Aorta (tissue), 5 donors: ENCODE measurements at regions of chr6 and their contacts with region 1.

Region 1: DNA sequence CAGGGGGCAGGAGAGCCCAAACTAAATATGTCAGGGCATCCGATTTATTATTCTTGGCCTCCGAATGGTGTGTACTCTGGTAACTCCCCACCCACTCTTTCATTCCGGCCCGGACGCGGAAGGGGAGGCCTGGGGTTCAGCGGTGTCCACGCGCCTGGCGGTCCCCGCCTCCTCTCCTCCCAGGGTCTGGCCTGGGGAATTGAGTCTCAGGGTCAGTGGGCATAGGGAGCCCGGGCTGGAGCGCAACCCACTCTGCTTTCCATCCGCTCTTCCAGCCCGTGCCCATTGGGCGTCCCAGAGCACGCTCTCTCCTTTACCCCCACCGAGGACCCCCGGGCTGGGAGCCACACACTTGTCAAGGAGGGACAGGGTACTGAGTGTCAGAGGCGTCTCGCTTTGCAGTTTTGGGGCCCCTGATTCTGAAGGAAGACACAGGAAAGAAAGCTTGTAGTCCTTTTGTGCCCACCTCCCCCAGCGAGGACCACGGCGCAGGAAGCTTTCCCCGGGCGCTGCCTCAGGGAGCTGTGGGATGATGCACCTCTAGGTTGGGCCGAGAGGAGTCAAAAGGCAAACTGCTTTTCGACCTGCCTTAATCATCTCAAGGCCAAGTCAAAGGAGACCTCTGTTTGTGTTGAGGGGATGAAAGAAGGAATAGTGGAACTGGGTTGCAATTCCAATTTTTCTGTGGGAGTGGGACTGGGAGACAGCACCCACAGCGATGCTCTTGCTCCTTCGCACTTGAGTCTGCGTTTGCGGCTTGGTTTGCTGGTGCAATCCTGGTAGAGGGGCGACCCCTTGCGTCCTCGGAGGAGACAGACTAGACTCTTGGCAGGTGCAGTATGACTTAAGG is 2.5 kb downstream of the RSPO3 start:
- DNase-seq: peak; percentile 77 to 88
- ATAC-seq: peak; percentile 71
- H3K4me3 ChIP-seq: no peak overlapping the region
- H3K27ac ChIP-seq: no peak overlapping the region
- H3K4me1 ChIP-seq: no peaks in the 10 kb centered on the region
- H3K27me3 ChIP-seq: no peaks in the 10 kb centered on the region

Region 2: DNA sequence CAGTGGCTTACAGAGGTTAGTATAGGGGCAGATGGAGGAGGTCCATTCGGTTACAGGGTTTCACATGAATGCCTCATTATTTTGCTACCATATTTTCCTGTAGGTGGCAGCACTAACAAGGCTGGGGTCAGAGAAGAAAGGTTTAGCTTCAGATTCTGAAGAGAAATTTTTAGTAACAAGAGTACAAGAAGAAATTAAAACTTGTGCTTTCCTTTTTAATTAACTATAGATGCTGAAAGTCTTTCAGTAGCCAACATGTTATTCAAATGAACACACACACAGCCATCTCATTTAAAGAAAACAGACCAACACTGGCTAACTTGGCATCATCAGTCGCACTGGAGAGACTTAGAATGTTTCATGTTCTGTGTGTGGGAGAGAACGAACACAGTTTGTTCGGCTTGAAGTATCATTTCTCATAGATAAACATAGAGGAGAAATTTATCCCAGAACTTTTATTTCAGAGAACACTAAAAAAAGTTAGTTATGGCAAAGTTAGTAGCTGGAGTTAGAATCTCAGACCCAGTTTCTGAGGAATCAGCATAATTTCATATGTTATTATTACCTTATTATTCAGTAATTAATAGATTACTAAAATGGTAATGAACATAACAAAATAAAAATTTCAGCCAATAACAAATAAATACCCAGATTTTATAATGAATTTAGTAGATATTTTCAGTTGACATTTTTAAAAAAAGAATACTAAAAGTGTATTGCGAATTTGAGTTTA is 316.5 kb before region 1 on chr6:
- intact Hi-C with region 1: loop called in 1 of 2 experiments (anchors 10 kb)
- DNase-seq: no peak
- ATAC-seq: peak; percentile 72
- H3K4me3 ChIP-seq: no peak overlapping the region
- H3K27ac ChIP-seq: no peak overlapping the region
- H3K4me1 ChIP-seq: no peaks in the 10 kb centered on the region
- H3K27me3 ChIP-seq: no peaks in the 10 kb centered on the region